Caco-2 (cell line): ENCODE measurements at regions of chr17 and their contacts with region 1.

Region 1: GRCh38 chr17:31858642-31859473 is at the start of gene COPRS:
- DNase-seq: peak; percentile 92 to 93
- H3K4me3 ChIP-seq: peak within 1 kb of the TSS; percentile 81
- H3K4me3 Mint-ChIP-seq: peak within 1 kb of the TSS; percentile 77
- H3K27ac Mint-ChIP-seq: peak within 1 kb of the TSS; percentile 26
- H3K4me1 ChIP-seq: no peaks in the 10 kb centered on the region
- H3K4me1 Mint-ChIP-seq: peaks cover 26% of the 10 kb centered on the region
- H3K27me3 ChIP-seq: no peaks in the 10 kb centered on the region
- H3K27me3 Mint-ChIP-seq: no peaks in the 10 kb centered on the region
- CTCF ChIP-seq: peak in 1 of 2 experiments; percentile 9
- total RNA-seq, gene COPRS: 56.7 and 62.2 TPM in 2 replicates

Region 2: GRCh38 chr17:31740611-31741082 is 118.2 kb before region 1 on chr17:
- CTCF ChIA-PET with region 1: no interaction called
- POLR2A ChIA-PET with region 1: no interaction called
- intact Hi-C with region 1: no loop called
- DNase-seq: no peak
- H3K4me3 ChIP-seq: no peak overlapping the region
- H3K4me3 Mint-ChIP-seq: no peak overlapping the region
- H3K27ac Mint-ChIP-seq: no peak overlapping the region
- H3K4me1 ChIP-seq: no peaks in the 10 kb centered on the region
- H3K4me1 Mint-ChIP-seq: peaks cover 11% of the 10 kb centered on the region
- H3K27me3 ChIP-seq: no peaks in the 10 kb centered on the region
- H3K27me3 Mint-ChIP-seq: no peaks in the 10 kb centered on the region
- CTCF ChIP-seq: no peak

Region 3: DNA sequence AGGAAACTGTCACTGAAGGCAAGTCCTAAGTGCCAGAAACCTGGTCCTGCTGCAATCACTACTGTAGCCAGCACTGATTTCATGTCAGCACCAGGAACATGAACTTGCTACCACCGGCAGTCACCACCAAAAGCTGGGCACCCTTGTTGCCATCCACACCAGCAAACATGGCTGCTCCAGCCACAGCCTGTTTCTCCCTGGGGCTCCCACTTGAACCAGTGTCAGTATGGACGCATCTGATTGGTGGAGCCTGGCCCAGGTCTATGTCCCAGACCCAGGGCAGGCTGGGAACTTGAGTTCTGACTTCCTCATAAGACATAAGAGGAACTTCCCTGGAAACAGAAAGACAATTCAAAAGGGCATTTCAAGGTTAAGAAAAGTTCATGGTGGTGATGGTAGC is 56.4 kb before region 1 on chr17:
- CTCF ChIA-PET with region 1: no interaction called
- POLR2A ChIA-PET with region 1: no interaction called
- intact Hi-C with region 1: no loop called
- DNase-seq: peak in 1 of 2 experiments; percentile 14
- H3K4me3 ChIP-seq: no peak overlapping the region
- H3K4me3 Mint-ChIP-seq: no peak overlapping the region
- H3K27ac Mint-ChIP-seq: peak overlapping the region; percentile 37
- H3K4me1 ChIP-seq: peaks cover 32% of the 10 kb centered on the region
- H3K4me1 Mint-ChIP-seq: peaks cover 16% of the 10 kb centered on the region
- H3K27me3 ChIP-seq: no peaks in the 10 kb centered on the region
- H3K27me3 Mint-ChIP-seq: no peaks in the 10 kb centered on the region
- CTCF ChIP-seq: no peak

Region 4: DNA sequence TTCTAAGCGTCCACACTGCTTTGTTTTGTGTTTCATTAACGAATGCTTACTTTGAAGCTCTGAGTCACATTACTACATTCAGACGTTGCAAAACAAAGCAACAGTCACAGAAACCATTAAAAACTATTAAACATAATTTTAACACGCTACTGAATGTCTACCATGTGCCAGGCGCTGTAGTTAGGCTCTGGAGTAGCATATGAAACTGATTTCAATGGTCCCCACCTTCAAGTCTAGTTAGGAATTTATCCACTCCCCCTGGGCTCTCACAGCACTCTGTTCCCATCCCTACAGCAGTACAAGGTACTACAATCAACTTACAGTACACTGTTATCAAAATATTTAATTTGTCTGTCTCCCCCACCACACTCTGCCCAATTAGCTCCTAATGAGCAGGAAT is 42.0 kb after region 1 on chr17:
- CTCF ChIA-PET with region 1: interaction called, 3 read pairs
- POLR2A ChIA-PET with region 1: interaction called, 8 read pairs
- intact Hi-C with region 1: loop called (anchors 1 kb)
- DNase-seq: peak in 1 of 2 experiments; percentile 13
- H3K4me3 ChIP-seq: peak overlapping the region; percentile 62
- H3K4me3 Mint-ChIP-seq: no peak overlapping the region
- H3K27ac Mint-ChIP-seq: no peak overlapping the region
- H3K4me1 ChIP-seq: 0 out of 2 replicates have a peak, but pooled peaks cover 4% of the 10 kb centered on the region
- H3K4me1 Mint-ChIP-seq: no peaks in the 10 kb centered on the region
- H3K27me3 ChIP-seq: no peaks in the 10 kb centered on the region
- H3K27me3 Mint-ChIP-seq: no peaks in the 10 kb centered on the region
- CTCF ChIP-seq: no peak